Cardiac septum (tissue), 1 donor: ENCODE measurements at regions of chr17 and their contacts with region 1.

Region 1: GRCh38 chr17:35764123-35764991 is 3.7 kb downstream of the C17orf50 start:
- DNase-seq: peak; percentile 92

Region 2: GRCh38 chr17:35808962-35809854 is 44.9 kb after region 1 on chr17 and contains the start of gene TAF15:
- intact Hi-C with region 1: loop called (anchors 1 kb)
- DNase-seq: peak; percentile 98
- total RNA-seq, gene TAF15: 140 TPM